ENCODE measurements at regions of chr16 and their contacts with region 1.

Region 1: GRCh38 chr16:31472709-31473203 is 804 bp downstream of the TGFB1I1 start:
- DNase-seq: peak; percentile 71 to 86 (median 76)
- ATAC-seq: peak; percentile 64
- H3K4me3 ChIP-seq: no peak overlapping the region
- H3K27ac ChIP-seq: no peak overlapping the region
- H3K4me1 ChIP-seq: peaks cover 19 to 52% of the 10 kb centered on the region in 2 experiments; a peak in 4 of 5 replicates
- H3K27me3 ChIP-seq: no peaks in the 10 kb centered on the region
- CTCF ChIP-seq: peak in 1 of 3 experiments; percentile 26; a peak in 2 of 6 replicates
- EP300 ChIP-seq: no peak
- POLR2A ChIP-seq: no peak
- RAD21 ChIP-seq: no peak

Region 2: DNA sequence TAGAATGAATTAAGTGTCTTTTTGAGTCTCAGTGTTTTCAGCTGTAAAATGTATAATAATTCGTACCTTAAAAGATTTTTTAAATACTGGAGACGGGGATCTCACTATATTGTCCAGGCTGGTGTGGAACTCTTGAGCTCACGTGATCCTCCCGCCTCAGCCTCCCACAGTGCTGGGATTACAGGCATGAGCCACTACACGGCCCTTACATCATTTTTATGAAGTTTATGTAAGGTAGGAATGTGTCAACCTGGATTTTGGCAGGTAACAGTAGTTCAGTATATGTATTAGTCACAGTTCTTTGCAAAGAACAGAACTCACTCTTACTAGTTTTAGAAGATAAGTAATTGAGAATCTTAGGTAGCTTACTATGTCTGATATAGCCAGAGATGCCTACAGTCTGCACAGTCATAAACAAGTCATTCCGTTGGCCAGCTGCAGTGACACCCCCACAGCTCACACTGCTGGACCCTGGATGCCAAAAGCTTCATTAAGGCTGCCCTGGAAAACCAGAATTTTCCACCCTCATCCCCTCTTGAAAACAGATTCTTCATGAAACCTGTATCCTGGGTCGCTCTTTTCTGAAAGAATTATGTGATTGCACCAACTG is 44.0 kb before region 1 on chr16:
- CTCF ChIA-PET with region 1: no interaction called
- POLR2A ChIA-PET with region 1: no interaction called
- in situ Hi-C with region 1: no loop called
- intact Hi-C with region 1: no loop called
- DNase-seq: no peak
- ATAC-seq: no peak
- H3K4me3 ChIP-seq: no peak overlapping the region
- H3K27ac ChIP-seq: no peak overlapping the region
- H3K4me1 ChIP-seq: peaks cover 0 to 12% of the 10 kb centered on the region in 2 experiments; a peak in 2 of 5 replicates
- H3K27me3 ChIP-seq: peaks cover 6 to 11% of the 10 kb centered on the region in 2 experiments; a peak in 4 of 5 replicates
- CTCF ChIP-seq: no peak
- EP300 ChIP-seq: no peak
- POLR2A ChIP-seq: no peak
- RAD21 ChIP-seq: no peak

Region 3: DNA sequence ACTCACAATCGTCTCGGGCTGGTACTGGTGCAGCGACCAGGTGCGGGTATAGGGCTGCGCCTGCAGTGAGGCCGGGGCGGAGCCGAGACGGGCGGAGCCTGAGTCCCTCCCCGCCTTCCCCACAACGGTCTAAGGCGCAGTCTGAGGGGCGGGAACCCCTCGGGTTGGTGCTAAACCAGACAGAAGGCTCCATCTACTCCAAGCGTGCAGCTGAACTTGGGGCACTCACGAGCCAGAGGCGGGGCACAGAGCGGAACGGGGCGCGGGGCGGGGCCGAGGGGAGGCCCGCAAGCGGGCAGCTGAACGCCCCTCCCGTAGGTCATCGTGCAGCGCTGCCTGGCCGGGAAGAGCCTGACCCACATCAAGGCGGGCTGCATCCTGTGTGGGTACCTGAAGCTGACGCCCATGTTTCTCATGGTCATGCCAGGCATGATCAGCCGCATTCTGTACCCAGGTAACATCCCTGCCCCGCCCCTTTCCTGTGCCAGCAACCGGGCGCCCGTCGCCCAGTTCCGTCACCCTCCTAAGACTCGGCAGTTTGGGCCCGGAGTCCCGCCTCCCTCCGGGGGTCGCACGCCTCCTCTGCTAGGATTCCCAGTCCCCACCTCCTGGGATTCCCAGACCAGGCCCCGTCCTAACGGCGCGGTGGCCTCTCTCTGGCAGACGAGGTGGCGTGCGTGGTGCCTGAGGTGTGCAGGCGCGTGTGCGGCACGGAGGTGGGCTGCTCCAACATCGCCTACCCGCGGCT is 15.1 kb after region 1 on chr16:
- CTCF ChIA-PET with region 1: no interaction called
- POLR2A ChIA-PET with region 1: interaction called, 13 read pairs
- in situ Hi-C with region 1: no loop called
- intact Hi-C with region 1: no loop called
- DNase-seq: no peak
- ATAC-seq: no peak
- H3K4me3 ChIP-seq: no peak overlapping the region
- H3K27ac ChIP-seq: no peak overlapping the region
- H3K4me1 ChIP-seq: peaks cover 5 to 14% of the 10 kb centered on the region in 2 experiments; a peak in 3 of 5 replicates
- H3K27me3 ChIP-seq: no peaks in the 10 kb centered on the region
- CTCF ChIP-seq: no peak
- EP300 ChIP-seq: no peak
- POLR2A ChIP-seq: 0 out of 2 replicates have a peak, but pooled peaks have one; percentile 15
- RAD21 ChIP-seq: no peak

Region 4: DNA sequence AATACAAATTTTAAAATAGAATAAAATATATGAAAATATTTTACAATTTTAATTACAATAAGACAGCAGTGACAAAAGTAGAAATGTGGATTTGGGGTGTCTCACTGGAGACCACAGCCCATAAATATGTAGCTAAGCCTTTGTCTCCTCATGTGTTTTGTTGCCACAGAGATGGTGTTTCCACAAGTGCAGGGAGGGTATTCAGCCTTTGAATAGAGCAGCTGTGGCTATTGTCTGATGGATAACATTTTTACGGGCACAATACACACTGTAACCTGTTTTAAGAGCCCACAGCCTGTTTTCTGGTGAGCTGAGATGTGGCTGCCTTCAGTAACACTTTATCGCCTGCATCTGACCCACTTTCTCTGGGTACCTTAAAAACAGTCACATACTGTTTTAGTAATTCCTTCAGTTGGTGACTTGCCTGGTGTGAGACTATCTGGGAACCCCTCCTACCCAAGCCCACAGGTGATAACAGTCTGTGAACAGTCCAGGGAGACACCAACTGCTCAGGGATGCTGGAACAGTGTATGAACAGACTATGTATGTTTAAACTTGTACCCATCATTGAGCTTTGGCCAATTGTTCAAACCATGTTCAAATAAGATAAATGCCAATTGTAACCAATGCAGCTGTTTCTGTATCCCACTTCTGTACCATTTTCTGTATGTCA is 47.1 kb after region 1 on chr16:
- CTCF ChIA-PET with region 1: no interaction called
- POLR2A ChIA-PET with region 1: no interaction called
- in situ Hi-C with region 1: no loop called
- intact Hi-C with region 1: loop called (anchors 5 kb)
- DNase-seq: no peak
- ATAC-seq: peak; percentile 18; the same call in 1 of the 3 replicates
- H3K4me3 ChIP-seq: no peak overlapping the region
- H3K27ac ChIP-seq: no peak overlapping the region
- H3K4me1 ChIP-seq: peaks cover 9 to 22% of the 10 kb centered on the region in 2 experiments; a peak in 4 of 5 replicates
- H3K27me3 ChIP-seq: no peaks in the 10 kb centered on the region
- CTCF ChIP-seq: no peak
- EP300 ChIP-seq: no peak
- POLR2A ChIP-seq: no peak
- RAD21 ChIP-seq: no peak